B cell (primary cell): ENCODE measurements at regions of chr12 and their contacts with region 1.

Region 1: DNA sequence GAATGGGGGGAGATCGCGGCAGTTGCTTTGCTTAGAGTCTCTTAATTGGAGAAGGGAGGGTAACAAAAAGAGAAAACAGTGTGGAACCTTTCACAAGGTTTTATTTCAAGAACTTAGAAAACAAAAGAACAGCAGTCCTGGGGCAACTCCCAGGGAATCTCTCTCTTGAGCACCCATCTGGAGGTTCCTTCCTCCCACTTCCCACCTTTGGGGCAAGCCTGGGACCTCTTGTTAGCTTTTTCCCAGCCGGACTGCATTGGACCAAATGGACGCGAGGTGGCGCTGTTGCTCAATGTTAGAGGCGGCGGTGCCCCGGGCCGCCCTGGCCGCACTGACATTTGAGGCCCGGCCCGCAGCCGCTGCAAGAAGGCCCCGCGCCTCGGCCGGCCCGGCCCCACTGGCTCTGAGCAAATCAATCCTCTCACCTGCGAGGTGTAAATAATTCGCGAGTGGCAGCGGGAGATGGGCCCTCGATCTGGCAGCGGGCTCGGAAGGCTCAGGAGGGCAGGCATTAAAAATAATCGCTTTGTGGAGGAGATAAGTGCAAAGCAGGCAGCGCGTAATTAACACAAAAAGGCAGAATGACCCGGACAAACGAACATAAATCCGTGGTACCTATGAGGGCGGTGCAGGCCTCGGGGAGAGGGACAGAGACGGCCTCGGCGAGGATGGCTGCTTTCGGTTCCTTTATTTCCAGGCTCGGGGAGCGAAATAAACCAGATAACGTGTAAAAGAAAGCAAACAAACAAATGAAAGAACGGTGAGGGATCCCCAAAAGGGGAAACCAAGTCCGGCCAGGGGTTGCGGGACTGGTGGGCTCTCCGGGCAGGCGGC is 2.7 kb upstream of the HOXC8 start:
- DNase-seq: peak; percentile 90
- ATAC-seq: peak; percentile 90
- H3K4me3 ChIP-seq: peak overlapping the region in 4 of 5 experiments; percentile 37 to 65 (median 50)
- H3K4me3 Mint-ChIP-seq: peak overlapping the region; percentile 82
- H3K27ac ChIP-seq: no peak overlapping the region
- H3K27ac Mint-ChIP-seq: peak overlapping the region; percentile 0
- H3K4me1 ChIP-seq: peaks cover 25 to 50% of the 10 kb centered on the region in 2 donors
- H3K4me1 Mint-ChIP-seq: peaks cover 27% of the 10 kb centered on the region
- H3K27me3 ChIP-seq: peaks cover 0 to 96% (median 82%) of the 10 kb centered on the region in 4 experiments
- H3K27me3 Mint-ChIP-seq: peaks cover 74% of the 10 kb centered on the region
- CTCF ChIP-seq: peak; percentile 98

Region 2: DNA sequence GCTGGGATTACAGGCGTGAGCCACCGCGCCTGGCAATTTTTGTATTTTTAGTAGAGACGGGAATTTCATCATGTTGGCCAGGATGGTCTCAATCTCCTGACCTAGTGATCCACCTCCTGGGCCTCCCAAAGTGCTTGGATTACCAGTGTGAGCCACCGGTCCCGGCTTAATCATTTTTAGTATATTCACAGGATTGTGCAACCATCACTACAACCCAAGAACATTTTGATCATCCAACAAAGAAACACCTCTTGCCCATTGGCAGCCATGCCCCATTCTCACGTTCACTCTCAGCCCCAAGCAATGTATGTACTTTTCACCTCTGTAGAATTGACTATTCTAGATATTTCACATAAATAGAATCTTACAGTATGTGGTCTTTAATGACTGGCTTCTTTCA is 606.2 kb before region 1 on chr12:
- CTCF ChIA-PET with region 1: no interaction called
- POLR2A ChIA-PET with region 1: no interaction called
- intact Hi-C with region 1: no loop called
- DNase-seq: no peak
- ATAC-seq: no peak
- H3K4me3 ChIP-seq: no peak overlapping the region
- H3K4me3 Mint-ChIP-seq: no peak overlapping the region
- H3K27ac ChIP-seq: no peak overlapping the region
- H3K27ac Mint-ChIP-seq: no peak overlapping the region
- H3K4me1 ChIP-seq: no peaks in the 10 kb centered on the region
- H3K4me1 Mint-ChIP-seq: peaks cover 9% of the 10 kb centered on the region
- H3K27me3 ChIP-seq: no peaks in the 10 kb centered on the region
- H3K27me3 Mint-ChIP-seq: no peaks in the 10 kb centered on the region
- CTCF ChIP-seq: no peak

Region 3: GRCh38 chr12:53887006-53887405 is 119.1 kb before region 1 on chr12:
- CTCF ChIA-PET with region 1: no interaction called
- POLR2A ChIA-PET with region 1: no interaction called
- intact Hi-C with region 1: no loop called
- DNase-seq: no peak
- ATAC-seq: no peak
- H3K4me3 ChIP-seq: no peak overlapping the region
- H3K4me3 Mint-ChIP-seq: no peak overlapping the region
- H3K27ac ChIP-seq: no peak overlapping the region
- H3K27ac Mint-ChIP-seq: no peak overlapping the region
- H3K4me1 ChIP-seq: no peaks in the 10 kb centered on the region
- H3K4me1 Mint-ChIP-seq: no peaks in the 10 kb centered on the region
- H3K27me3 ChIP-seq: peaks cover 0 to 12% (median 2%) of the 10 kb centered on the region in 4 experiments
- H3K27me3 Mint-ChIP-seq: peaks cover 17% of the 10 kb centered on the region
- CTCF ChIP-seq: no peak

Region 4: DNA sequence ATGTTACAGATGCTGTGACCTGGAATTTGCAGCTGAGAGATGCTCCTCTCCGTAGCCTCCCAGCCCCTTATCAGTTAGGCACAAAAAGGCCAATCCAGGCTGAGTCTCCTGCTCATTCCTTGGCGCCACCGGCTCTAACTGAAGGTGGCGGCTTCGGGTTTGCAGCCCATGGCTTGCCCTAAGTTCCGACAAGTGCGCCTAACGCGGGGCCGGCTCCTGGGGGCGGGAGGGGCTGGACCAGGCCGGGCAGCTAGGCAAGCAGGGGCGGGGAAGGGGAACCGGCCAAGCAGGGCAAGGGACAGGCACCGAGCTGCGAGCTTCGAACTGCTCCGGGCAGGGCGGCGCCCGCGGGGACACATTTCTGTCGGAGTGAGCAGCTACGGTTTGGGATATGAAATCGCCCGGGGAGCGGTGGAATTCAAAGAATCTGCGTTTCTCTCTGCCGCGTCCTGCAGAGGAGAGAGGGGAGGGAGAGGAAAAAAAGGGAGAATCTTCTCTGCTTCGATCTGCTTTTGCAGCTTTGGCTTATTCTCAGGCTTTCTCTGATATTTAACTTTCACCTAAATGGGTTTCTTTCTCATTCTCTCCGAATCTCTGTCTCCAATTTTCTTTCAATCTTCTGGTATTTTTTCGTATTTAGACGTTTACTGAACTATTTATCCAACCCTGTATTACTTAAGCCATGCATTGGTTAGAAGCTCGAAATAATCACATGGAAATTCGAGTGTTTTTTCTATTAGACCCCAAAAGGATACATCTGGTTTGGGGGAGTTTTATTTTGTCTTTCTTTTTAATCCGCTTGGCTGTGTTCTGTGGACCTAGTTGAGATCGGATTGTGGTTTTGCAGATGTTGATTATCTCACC is 53.0 kb before region 1 on chr12:
- CTCF ChIA-PET with region 1: no interaction called
- POLR2A ChIA-PET with region 1: no interaction called
- intact Hi-C with region 1: loop called (anchors 5 kb)
- DNase-seq: peak; percentile 50
- ATAC-seq: no peak
- H3K4me3 ChIP-seq: no peak overlapping the region
- H3K4me3 Mint-ChIP-seq: no peak overlapping the region
- H3K27ac ChIP-seq: no peak overlapping the region
- H3K27ac Mint-ChIP-seq: no peak overlapping the region
- H3K4me1 ChIP-seq: peaks cover 14 to 55% of the 10 kb centered on the region in 2 donors
- H3K4me1 Mint-ChIP-seq: peaks cover 17% of the 10 kb centered on the region
- H3K27me3 ChIP-seq: peaks cover 0 to 98% (median 82%) of the 10 kb centered on the region in 4 experiments
- H3K27me3 Mint-ChIP-seq: peaks cover 70% of the 10 kb centered on the region
- CTCF ChIP-seq: no peak

Region 5: DNA sequence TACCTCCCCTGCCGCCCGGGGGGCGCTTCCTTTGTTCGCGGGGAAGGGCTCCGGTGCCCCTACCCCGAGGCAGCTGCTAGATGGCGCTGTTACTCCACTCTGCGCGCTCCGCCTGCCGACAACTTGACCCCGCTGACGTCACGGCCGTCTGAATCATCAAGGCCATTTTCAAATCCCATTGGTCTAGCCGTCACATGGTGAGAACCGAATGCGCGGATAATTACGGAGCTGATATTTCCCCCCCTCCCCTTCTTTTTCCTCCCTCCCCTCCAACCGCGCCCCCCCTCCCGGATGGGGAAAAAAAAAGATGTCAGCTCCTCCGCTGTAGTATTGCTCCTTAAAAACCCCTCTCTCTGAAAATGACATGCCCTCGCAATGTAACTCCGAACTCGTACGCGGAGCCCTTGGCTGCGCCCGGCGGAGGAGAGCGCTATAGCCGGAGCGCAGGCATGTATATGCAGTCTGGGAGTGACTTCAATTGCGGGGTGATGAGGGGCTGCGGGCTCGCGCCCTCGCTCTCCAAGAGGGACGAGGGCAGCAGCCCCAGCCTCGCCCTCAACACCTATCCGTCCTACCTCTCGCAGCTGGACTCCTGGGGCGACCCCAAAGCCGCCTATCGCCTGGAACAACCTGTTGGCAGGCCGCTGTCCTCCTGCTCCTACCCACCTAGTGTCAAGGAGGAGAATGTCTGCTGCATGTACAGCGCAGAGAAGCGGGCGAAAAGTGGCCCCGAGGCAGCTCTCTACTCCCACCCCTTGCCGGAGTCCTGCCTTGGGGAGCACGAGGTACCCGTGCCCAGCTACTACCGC is 21.0 kb before region 1 on chr12 and contains the start of gene HOXC10:
- CTCF ChIA-PET with region 1: interaction called, 11 read pairs
- POLR2A ChIA-PET with region 1: no interaction called
- intact Hi-C with region 1: no loop called
- DNase-seq: peak; percentile 48
- ATAC-seq: no peak
- H3K4me3 ChIP-seq: no peak within 1 kb of the TSS
- H3K4me3 Mint-ChIP-seq: peak within 1 kb of the TSS; percentile 47
- H3K27ac ChIP-seq: no peak within 1 kb of the TSS
- H3K27ac Mint-ChIP-seq: peak within 1 kb of the TSS; percentile 74
- H3K4me1 ChIP-seq: peaks cover 30 to 44% of the 10 kb centered on the region in 2 donors
- H3K4me1 Mint-ChIP-seq: peaks cover 23% of the 10 kb centered on the region
- H3K27me3 ChIP-seq: peaks cover 0 to 97% (median 93%) of the 10 kb centered on the region in 4 experiments
- H3K27me3 Mint-ChIP-seq: peaks cover 87% of the 10 kb centered on the region
- CTCF ChIP-seq: peak; percentile 24
- total RNA-seq, gene HOXC10: not detected in 2 replicates

Region 6: GRCh38 chr12:54032627-54033100 is 26.6 kb after region 1 on chr12 and contains the start of gene HOXC5:
- CTCF ChIA-PET with region 1: interaction called, 56 read pairs
- POLR2A ChIA-PET with region 1: interaction called, 6 read pairs
- intact Hi-C with region 1: no loop called
- DNase-seq: peak; percentile 79
- ATAC-seq: peak; percentile 65
- H3K4me3 ChIP-seq: peak within 1 kb of the TSS in 3 of 5 experiments; percentile 13 to 47 (median 36)
- H3K4me3 Mint-ChIP-seq: peak within 1 kb of the TSS; percentile 71
- H3K27ac ChIP-seq: no peak within 1 kb of the TSS
- H3K27ac Mint-ChIP-seq: peak within 1 kb of the TSS; percentile 41
- H3K4me1 ChIP-seq: peaks cover 28 to 51% of the 10 kb centered on the region in 2 donors
- H3K4me1 Mint-ChIP-seq: peaks cover 29% of the 10 kb centered on the region
- H3K27me3 ChIP-seq: peaks cover 0 to 96% (median 73%) of the 10 kb centered on the region in 4 experiments
- H3K27me3 Mint-ChIP-seq: peaks cover 73% of the 10 kb centered on the region
- CTCF ChIP-seq: peak; percentile 93
- total RNA-seq, gene HOXC5: not detected in 2 replicates

Region 7: GRCh38 chr12:54191550-54192022 is 185.5 kb after region 1 on chr12:
- CTCF ChIA-PET with region 1: interaction called, 106 read pairs
- POLR2A ChIA-PET with region 1: no interaction called
- intact Hi-C with region 1: loop called (anchors 1 kb)
- DNase-seq: peak; percentile 90
- ATAC-seq: peak; percentile 64
- H3K4me3 ChIP-seq: no peak overlapping the region
- H3K4me3 Mint-ChIP-seq: no peak overlapping the region
- H3K27ac ChIP-seq: no peak overlapping the region
- H3K27ac Mint-ChIP-seq: peak overlapping the region; percentile 61
- H3K4me1 ChIP-seq: peaks cover 27 to 42% of the 10 kb centered on the region in 2 donors
- H3K4me1 Mint-ChIP-seq: peaks cover 41% of the 10 kb centered on the region
- H3K27me3 ChIP-seq: peaks cover 0 to 42% (median 12%) of the 10 kb centered on the region in 4 experiments
- H3K27me3 Mint-ChIP-seq: peaks cover 35% of the 10 kb centered on the region
- CTCF ChIP-seq: peak; percentile 77

Region 8: GRCh38 chr12:54207484-54208294 is 201.6 kb after region 1 on chr12:
- CTCF ChIA-PET with region 1: interaction called, 159 read pairs
- POLR2A ChIA-PET with region 1: interaction called, 4 read pairs
- intact Hi-C with region 1: loop called (anchors 1 kb)
- DNase-seq: peak; percentile 82
- ATAC-seq: peak; percentile 99
- H3K4me3 ChIP-seq: no peak overlapping the region
- H3K4me3 Mint-ChIP-seq: no peak overlapping the region
- H3K27ac ChIP-seq: no peak overlapping the region
- H3K27ac Mint-ChIP-seq: peak overlapping the region; percentile 67
- H3K4me1 ChIP-seq: peaks cover 0 to 4% of the 10 kb centered on the region in 2 donors
- H3K4me1 Mint-ChIP-seq: peaks cover 4% of the 10 kb centered on the region
- H3K27me3 ChIP-seq: peaks cover 0 to 70% (median 6%) of the 10 kb centered on the region in 4 experiments
- H3K27me3 Mint-ChIP-seq: peaks cover 44% of the 10 kb centered on the region
- CTCF ChIP-seq: peak; percentile 95

Region 9: GRCh38 chr12:54279866-54280467 is 273.9 kb after region 1 on chr12 and contains the start of gene CBX5:
- CTCF ChIA-PET with region 1: no interaction called
- POLR2A ChIA-PET with region 1: no interaction called
- intact Hi-C with region 1: loop called (anchors 5 kb)
- DNase-seq: peak; percentile 100
- ATAC-seq: peak; percentile 44
- H3K4me3 ChIP-seq: peak within 1 kb of the TSS; percentile 79 to 99 (median 99)
- H3K4me3 Mint-ChIP-seq: no peak within 1 kb of the TSS
- H3K27ac ChIP-seq: peak within 1 kb of the TSS; percentile 96 to 97
- H3K27ac Mint-ChIP-seq: no peak within 1 kb of the TSS
- H3K4me1 ChIP-seq: peaks cover 50 to 54% of the 10 kb centered on the region in 2 donors
- H3K4me1 Mint-ChIP-seq: peaks cover 49% of the 10 kb centered on the region
- H3K27me3 ChIP-seq: no peaks in the 10 kb centered on the region
- H3K27me3 Mint-ChIP-seq: no peaks in the 10 kb centered on the region
- CTCF ChIP-seq: no peak
- total RNA-seq, gene CBX5: 64.8 and 66.2 TPM in 2 replicates